Ovary (tissue), 10 donors: ENCODE measurements at regions of chr21 and their contacts with region 1.

Region 1: DNA sequence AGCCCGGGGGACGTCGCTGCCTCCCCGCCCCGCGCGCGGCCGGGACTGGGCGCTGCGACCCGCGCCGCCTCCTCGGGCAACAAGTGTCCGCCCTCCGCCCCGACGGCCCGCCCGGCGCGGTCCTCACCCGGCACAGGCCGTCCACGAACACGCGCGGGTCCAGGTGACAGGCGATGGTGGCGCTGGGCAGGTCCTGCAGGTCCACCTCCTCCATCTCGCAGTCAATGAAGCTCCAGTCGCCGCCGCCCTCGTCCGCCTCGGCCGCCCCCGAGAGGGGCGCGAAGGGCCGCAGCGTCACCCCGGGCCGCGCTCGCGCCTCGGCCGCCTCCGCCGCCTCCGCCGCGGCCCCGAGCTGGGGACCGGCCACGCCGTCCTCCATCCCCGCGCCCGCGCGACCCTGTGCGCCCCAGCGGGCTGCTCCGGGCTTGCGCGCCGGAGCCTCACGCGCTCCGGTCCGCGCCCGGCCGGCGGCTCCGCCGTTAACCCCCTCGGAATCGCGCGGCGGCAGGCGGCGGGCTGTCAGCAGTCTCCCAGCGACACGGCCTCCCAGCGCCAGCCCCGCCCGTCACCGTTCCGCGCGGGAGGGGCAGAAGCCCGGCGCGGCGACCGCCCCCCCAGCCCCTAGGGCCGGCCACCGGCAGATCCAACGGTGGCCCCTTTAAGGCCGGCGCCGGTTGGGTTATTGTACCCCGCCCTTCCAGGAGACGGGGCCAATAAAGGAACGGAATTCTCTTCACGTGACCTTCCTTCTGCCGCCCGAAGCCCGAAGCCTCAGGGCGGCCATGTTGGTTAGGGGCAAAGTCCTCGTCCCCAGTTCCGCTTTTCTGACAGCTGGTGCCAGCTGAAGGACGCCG is at the start of gene RCAN1:
- DNase-seq: peak; percentile 82 to 88 (median 86)
- H3K4me3 ChIP-seq: peak within 1 kb of the TSS; percentile 52
- H3K27ac ChIP-seq: peak within 1 kb of the TSS in 1 of 2 donors; percentile 54
- H3K4me1 ChIP-seq: peaks cover 2% of the 10 kb centered on the region
- H3K27me3 ChIP-seq: no peaks in the 10 kb centered on the region
- CTCF ChIP-seq: no peak
- EP300 ChIP-seq: no peak
- POLR2A ChIP-seq: no peak
- total RNA-seq, gene RCAN1: 8.7 to 13.3 (median 10.0) TPM

Region 2: DNA sequence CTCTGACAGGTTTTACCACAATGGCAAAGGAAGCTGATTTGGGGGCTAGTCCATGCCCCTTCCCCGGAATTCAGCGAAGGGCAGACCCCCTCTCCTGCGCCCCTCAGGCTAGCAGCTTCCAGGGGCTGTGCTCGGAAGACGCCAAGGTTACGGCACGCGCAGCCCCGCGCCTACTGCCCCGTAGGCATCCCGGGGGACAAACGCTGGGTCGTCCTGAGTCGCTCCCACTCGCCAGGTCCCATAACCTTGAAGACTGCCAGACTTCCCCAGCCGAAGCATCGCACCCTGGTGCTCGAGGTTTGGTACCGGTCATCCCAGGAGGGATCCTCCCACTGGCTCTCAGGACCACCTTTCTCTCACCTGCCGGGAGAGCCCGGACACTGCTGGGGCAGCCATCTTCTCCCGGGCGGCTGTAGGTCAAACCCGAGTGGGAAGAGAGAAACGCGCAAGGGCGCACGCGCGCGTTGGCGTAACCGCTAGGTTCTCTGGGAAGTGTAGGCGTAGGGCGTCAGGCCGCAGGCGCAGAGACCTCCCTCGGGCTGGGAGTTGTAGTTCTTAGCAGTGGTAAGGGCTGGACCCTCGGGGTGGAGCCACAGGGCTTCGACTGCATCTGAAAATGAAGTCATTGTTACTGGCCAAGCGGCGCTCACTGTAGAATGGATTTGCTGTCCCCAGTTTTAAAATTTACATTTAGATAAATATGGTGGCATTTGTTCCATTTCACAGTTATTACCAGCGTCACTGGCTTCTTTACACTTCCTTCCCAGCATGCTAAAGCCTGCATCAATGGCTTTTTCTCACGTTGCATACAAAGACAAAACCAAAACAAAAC is 699.3 kb before region 1 on chr21 and contains the start of gene ATP5PO:
- intact Hi-C with region 1: loop called in 1 of 4 experiments (anchors 10 kb)
- DNase-seq: peak; percentile 96 to 98 (median 96)
- H3K4me3 ChIP-seq: peak within 1 kb of the TSS; percentile 92
- H3K27ac ChIP-seq: peak within 1 kb of the TSS; percentile 44 to 60
- H3K4me1 ChIP-seq: peaks cover 5% of the 10 kb centered on the region
- H3K27me3 ChIP-seq: no peaks in the 10 kb centered on the region
- CTCF ChIP-seq: peak in 1 of 3 donors; percentile 8
- EP300 ChIP-seq: no peak
- POLR2A ChIP-seq: peak; percentile 61
- total RNA-seq, gene ATP5PO: 144 to 221 (median 169) TPM

Region 3: DNA sequence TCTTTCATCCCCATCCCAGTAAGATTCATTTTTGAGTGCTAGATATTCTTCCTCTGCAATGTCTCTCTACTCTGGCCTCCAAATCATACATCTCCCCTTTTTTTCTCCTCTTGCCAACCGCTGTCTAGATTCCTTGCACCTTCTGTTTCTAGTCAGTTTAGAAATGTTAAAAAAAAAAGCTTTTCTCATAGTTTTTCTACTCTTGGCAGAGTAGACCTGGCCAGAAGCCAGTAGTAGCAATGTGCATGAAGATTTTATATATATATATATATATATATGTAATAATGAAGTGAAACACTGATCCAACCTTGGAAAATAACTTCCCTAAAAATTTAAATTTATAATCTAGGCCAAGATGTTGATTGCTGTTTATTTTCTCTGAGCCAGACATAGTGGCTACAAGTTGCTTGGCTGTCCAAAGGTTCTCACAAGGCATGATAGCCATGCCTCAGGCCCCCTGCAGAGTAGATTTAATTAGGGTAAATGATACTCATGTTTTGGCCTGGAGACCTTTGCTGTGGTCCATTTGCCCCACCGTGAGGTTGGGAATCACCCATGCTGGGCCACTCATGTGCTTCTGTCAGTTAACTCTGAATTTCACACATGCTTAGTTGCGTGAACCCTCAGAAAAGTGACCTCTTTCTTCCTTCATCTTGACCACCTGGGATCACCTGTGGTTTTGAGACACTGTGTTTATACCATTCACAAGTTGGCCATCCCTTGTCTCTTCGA is 354.4 kb before region 1 on chr21:
- intact Hi-C with region 1: no loop called
- DNase-seq: no peak
- H3K4me3 ChIP-seq: no peak overlapping the region
- H3K27ac ChIP-seq: no peak overlapping the region
- H3K4me1 ChIP-seq: no peaks in the 10 kb centered on the region
- H3K27me3 ChIP-seq: no peaks in the 10 kb centered on the region
- CTCF ChIP-seq: no peak
- EP300 ChIP-seq: no peak
- POLR2A ChIP-seq: no peak